CD4-positive, alpha-beta T cell (primary cell): ENCODE measurements at regions of chr10 and their contacts with region 1.

Region 1: DNA sequence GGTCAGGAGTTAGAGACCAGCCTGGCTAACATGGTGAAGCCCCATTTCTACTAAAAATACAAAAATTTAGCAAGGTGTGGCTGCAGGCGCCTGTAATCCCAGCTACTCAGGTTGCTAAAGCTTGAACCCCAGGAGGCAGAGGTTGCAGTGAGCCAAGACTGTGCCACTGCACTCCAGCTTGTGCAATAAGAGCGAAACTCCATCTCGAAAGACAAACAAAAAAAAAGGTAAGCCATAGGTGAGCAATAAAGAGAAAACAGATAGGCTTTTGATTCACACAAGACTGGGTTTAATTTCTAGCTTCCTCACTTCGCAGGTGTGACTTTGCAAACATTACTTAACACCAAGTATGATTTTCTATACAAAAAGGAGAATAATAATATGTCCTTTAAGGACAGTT is 72.3 kb upstream of the ACBD5 start:
- DNase-seq: no peak
- ATAC-seq: no peak
- H3K4me3 ChIP-seq: no peak overlapping the region
- H3K4me3 Mint-ChIP-seq: no peak overlapping the region
- H3K27ac ChIP-seq: no peak overlapping the region
- H3K27ac Mint-ChIP-seq: no peak overlapping the region
- H3K4me1 ChIP-seq: no peaks in the 10 kb centered on the region
- H3K4me1 Mint-ChIP-seq: no peaks in the 10 kb centered on the region
- H3K27me3 ChIP-seq: no peaks in the 10 kb centered on the region
- H3K27me3 Mint-ChIP-seq: peaks cover 18% of the 10 kb centered on the region
- CTCF ChIP-seq: no peak

Region 2: DNA sequence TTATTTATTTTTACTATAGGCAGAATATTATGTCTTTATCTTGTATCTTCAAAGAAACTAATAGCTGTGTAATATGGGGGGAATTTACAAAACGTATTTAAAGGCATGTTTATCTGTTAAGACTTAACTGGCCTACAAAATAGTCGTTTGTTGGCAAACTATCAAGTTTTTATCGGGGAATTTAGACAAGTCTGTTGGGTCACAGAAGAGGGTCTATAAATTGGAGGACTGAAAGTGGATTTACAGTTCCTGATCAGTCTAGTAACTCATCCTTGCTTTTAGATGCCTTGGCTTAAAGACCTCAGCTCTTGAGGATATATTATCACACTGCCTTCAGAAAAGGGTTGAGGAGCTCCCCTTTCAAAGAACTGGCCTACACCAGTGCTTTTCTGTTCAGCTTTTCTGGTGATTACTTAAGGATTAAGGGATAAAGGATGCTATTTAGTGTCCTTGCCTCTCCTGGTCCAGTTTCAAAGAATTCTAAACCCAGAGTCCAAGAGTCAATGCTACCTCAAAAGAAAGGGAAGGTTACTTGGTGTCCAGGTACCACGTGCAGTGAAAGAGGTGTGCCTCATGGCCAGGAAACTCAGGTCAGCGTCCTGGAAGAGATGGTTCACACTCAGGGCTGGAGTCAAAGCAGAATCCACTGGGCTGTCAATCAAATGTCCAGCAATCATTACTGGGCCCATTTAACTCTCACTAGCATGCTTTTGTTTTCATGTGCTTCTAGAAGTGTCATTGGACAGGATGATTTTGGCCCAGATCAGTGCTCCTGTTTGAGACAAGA is 409.2 kb before region 1 on chr10:
- CTCF ChIA-PET with region 1: no interaction called
- POLR2A ChIA-PET with region 1: no interaction called
- intact Hi-C with region 1: loop called in 1 of 2 experiments (anchors 5 kb)
- DNase-seq: no peak
- ATAC-seq: no peak
- H3K4me3 ChIP-seq: no peak overlapping the region
- H3K4me3 Mint-ChIP-seq: no peak overlapping the region
- H3K27ac ChIP-seq: no peak overlapping the region
- H3K27ac Mint-ChIP-seq: no peak overlapping the region
- H3K4me1 ChIP-seq: no peaks in the 10 kb centered on the region
- H3K4me1 Mint-ChIP-seq: no peaks in the 10 kb centered on the region
- H3K27me3 ChIP-seq: no peaks in the 10 kb centered on the region
- H3K27me3 Mint-ChIP-seq: no peaks in the 10 kb centered on the region
- CTCF ChIP-seq: no peak